ENCODE measurements at regions of chr2 and their contacts with region 1.

Region 1: DNA sequence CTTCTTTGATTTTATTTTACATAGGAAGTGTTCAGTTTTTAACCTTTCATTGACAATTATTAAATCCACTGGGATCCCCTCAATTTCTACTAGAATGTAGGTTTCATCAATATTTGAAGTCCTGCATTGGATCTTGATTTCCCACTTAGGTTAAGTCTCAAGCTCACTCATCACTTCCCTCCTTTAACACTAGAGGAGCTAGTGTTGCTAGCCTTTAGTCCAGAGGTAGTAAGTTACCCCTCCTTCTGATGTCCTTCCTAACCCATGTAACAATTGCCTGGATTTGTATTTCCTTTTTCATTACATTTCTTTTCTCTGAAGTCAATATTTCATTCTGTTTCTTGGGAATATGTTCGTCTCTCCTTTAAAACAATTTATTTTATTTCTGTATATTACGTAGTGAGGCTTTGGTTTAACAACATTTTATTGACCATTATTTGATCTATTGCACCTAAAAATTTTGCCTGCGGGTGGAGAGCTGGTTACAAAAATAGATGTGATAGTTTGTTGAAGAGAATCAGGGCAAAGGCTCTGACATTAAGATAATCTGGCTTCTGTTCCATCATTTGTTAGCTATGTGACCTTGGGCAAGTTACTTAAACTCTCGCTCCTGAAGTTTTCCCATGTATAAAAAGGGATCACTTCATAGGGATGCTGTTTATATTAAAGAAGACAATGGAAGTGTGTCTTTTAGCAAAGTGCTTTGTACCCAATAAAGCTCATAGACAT is 833.0 kb downstream of the SLC4A3 start:
- DNase-seq: no peak
- ATAC-seq: no peak

Region 2: GRCh38 chr2:220104871-220105351 is 355.5 kb before region 1 on chr2:
- intact Hi-C with region 1: loop called in 1 of 2 experiments (anchors 10 kb)
- DNase-seq: peak; percentile 52
- ATAC-seq: peak; percentile 88 to 98

Region 3: GRCh38 chr2:220835583-220835982 is 375.2 kb after region 1 on chr2:
- intact Hi-C with region 1: no loop called
- DNase-seq: no peak
- ATAC-seq: no peak